Vagina (tissue), 2 donors: ENCODE measurements at regions of chr4 and their contacts with region 1.

Region 1: GRCh38 chr4:139295206-139295941 is 5.9 kb upstream of the NAA15 start:
- DNase-seq: peak in 1 of 2 donors; percentile 93
- H3K4me3 ChIP-seq: peak overlapping the region; percentile 66 to 92
- H3K27ac ChIP-seq: peak overlapping the region; percentile 93
- H3K4me1 ChIP-seq: peaks cover 21% of the 10 kb centered on the region
- H3K27me3 ChIP-seq: no peaks in the 10 kb centered on the region
- CTCF ChIP-seq: peak; percentile 85 to 96 (median 90)
- POLR2A ChIP-seq: no peak

Region 2: GRCh38 chr4:138959097-138959815 is 336.1 kb before region 1 on chr4:
- intact Hi-C with region 1: no loop called
- DNase-seq: no peak
- H3K4me3 ChIP-seq: no peak overlapping the region
- H3K27ac ChIP-seq: no peak overlapping the region
- H3K4me1 ChIP-seq: no peaks in the 10 kb centered on the region
- H3K27me3 ChIP-seq: no peaks in the 10 kb centered on the region
- CTCF ChIP-seq: no peak
- POLR2A ChIP-seq: no peak

Region 3: DNA sequence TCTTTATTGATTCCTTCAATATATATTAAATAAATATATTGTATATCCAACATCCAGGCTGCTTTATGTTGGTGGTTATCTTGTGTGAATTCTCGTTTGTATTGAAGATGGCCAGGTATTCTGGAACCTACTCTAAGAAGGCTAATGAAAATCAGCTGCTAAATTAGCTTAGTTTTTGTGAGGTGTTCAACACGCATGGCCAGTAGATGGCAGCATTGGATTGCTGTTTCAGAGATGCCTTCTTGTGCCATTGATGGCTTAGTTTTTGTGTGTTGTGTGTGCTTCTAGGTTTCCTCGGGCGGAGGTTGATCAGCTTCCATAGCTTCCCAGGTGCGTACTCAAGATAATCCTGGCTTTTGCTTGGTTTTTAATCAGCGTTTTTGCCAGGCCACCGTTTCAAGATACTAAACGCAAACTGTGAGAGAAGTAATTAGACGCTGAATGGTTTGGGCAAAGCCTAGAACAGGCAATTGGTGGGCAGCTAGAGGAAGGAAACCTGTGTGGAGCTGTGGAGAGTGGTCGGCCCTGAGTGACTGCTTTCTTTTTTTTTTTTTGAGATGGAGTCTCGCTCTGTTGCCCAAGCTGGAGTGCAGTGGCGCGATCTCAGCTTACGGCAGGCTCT is 264.6 kb before region 1 on chr4:
- intact Hi-C with region 1: loop called (anchors 10 kb)
- DNase-seq: no peak
- H3K4me3 ChIP-seq: no peak overlapping the region
- H3K27ac ChIP-seq: no peak overlapping the region
- H3K4me1 ChIP-seq: no peaks in the 10 kb centered on the region
- H3K27me3 ChIP-seq: no peaks in the 10 kb centered on the region
- CTCF ChIP-seq: peak; percentile 45 to 84 (median 59)
- POLR2A ChIP-seq: no peak

Region 4: GRCh38 chr4:139083956-139084803 is 211.2 kb before region 1 on chr4:
- intact Hi-C with region 1: loop called (anchors 5 kb)
- DNase-seq: peak in 1 of 2 donors; percentile 93
- H3K4me3 ChIP-seq: peak overlapping the region; percentile 83 to 92
- H3K27ac ChIP-seq: peak overlapping the region; percentile 95
- H3K4me1 ChIP-seq: peaks cover 38% of the 10 kb centered on the region
- H3K27me3 ChIP-seq: no peaks in the 10 kb centered on the region
- CTCF ChIP-seq: peak in 1 of 3 experiments; percentile 8
- POLR2A ChIP-seq: peak in 1 of 2 donors; percentile 6

Region 5: DNA sequence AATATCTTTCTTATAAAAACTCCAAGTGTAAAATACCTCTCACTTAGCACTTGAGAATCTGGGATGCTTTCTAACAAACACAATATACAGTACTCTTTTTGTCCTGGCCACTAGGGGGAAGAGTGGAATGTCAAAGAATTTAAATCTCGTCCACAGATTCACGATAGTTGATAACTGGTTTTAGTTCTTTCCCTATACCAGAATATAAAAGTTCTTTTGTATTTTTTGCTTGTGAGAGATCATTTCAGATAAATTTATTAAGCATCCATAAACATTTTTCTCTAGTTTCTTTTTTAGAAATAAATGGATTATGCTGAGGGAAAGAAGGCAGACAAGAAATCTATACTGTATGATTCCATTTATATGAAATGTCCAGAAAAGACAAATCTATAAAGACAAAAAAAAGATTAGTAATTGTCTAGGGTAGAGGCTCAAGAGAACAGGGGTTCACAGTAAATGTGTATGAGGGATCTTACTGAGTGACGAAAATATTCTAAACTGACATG is 65.8 kb before region 1 on chr4:
- intact Hi-C with region 1: loop called (anchors 10 kb)
- DNase-seq: no peak
- H3K4me3 ChIP-seq: no peak overlapping the region
- H3K27ac ChIP-seq: no peak overlapping the region
- H3K4me1 ChIP-seq: no peaks in the 10 kb centered on the region
- H3K27me3 ChIP-seq: no peaks in the 10 kb centered on the region
- CTCF ChIP-seq: peak; percentile 22 to 73 (median 39)
- POLR2A ChIP-seq: no peak